ENCODE measurements at regions of chr12 and their contacts with region 1.

Region 1: GRCh38 chr12:79547735-79548609 is 142.8 kb downstream of the PAWR start:
- DNase-seq: peak; percentile 69 to 74
- H3K4me3 ChIP-seq: no peak overlapping the region
- H3K4me3 Mint-ChIP-seq: peak overlapping the region; percentile 57
- H3K27ac Mint-ChIP-seq: peak overlapping the region; percentile 97
- H3K4me1 ChIP-seq: peaks cover 56% of the 10 kb centered on the region
- H3K4me1 Mint-ChIP-seq: peaks cover 56% of the 10 kb centered on the region
- H3K27me3 ChIP-seq: no peaks in the 10 kb centered on the region
- H3K27me3 Mint-ChIP-seq: no peaks in the 10 kb centered on the region
- CTCF ChIP-seq: peak; percentile 56 to 67

Region 2: GRCh38 chr12:79512053-79512452 is 35.9 kb before region 1 on chr12:
- CTCF ChIA-PET with region 1: interaction called, 3 read pairs
- POLR2A ChIA-PET with region 1: no interaction called
- intact Hi-C with region 1: loop called (anchors 2 kb)
- DNase-seq: peak in 1 of 2 experiments; percentile 12
- H3K4me3 ChIP-seq: no peak overlapping the region
- H3K4me3 Mint-ChIP-seq: no peak overlapping the region
- H3K27ac Mint-ChIP-seq: peak overlapping the region; percentile 48
- H3K4me1 ChIP-seq: no peaks in the 10 kb centered on the region
- H3K4me1 Mint-ChIP-seq: no peaks in the 10 kb centered on the region
- H3K27me3 ChIP-seq: no peaks in the 10 kb centered on the region
- H3K27me3 Mint-ChIP-seq: no peaks in the 10 kb centered on the region
- CTCF ChIP-seq: peak in 1 of 2 experiments; percentile 11

Region 3: DNA sequence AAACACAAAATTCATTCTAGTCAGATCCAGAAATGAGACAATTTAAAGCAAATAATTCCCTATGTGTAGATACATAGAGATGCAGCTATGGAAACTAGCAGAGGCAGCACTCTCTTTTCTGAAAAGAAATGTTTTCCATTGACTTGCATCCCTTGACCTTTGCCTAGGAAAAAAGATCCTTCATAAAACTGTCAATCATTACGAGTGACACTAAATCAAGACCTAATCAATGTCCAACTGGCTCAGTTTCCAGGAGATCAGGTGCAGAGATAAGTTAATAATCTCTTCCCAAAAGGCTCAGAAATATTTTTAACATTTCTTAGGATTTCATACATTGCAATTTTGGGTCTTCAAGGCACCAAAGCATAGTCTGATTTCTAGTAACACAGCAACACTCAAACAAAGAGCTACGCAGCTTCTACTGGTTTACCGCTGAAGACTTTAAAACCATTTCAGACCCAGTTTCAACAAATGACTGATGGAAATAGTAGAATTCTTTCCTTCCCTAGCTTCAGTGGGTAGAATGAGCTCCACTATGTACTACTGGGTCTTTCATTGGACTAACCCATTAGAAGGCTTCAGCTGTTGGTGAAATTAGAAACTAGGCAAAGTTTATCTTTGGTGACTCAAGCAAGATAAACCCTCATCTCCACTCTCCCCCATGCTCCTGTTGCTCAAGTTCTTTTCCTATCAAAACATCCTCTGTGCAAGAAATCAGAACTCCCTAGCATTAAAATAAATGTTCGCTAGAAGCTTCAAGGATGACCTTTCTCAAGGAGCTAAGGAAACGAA is 16.7 kb before region 1 on chr12:
- CTCF ChIA-PET with region 1: interaction called, 10 read pairs
- POLR2A ChIA-PET with region 1: interaction called, 8 read pairs
- intact Hi-C with region 1: loop called (anchors 1 kb)
- DNase-seq: no peak
- H3K4me3 ChIP-seq: no peak overlapping the region
- H3K4me3 Mint-ChIP-seq: no peak overlapping the region
- H3K27ac Mint-ChIP-seq: peak overlapping the region; percentile 78
- H3K4me1 ChIP-seq: peaks cover 62% of the 10 kb centered on the region
- H3K4me1 Mint-ChIP-seq: peaks cover 36% of the 10 kb centered on the region
- H3K27me3 ChIP-seq: no peaks in the 10 kb centered on the region
- H3K27me3 Mint-ChIP-seq: no peaks in the 10 kb centered on the region
- CTCF ChIP-seq: no peak

Region 4: GRCh38 chr12:79560225-79560889 is 12.4 kb after region 1 on chr12:
- CTCF ChIA-PET with region 1: interaction called, 7 read pairs
- POLR2A ChIA-PET with region 1: interaction called, 3 read pairs
- intact Hi-C with region 1: loop called (anchors 1 kb)
- DNase-seq: peak; percentile 63 to 64
- H3K4me3 ChIP-seq: no peak overlapping the region
- H3K4me3 Mint-ChIP-seq: peak overlapping the region; percentile 42
- H3K27ac Mint-ChIP-seq: peak overlapping the region; percentile 95
- H3K4me1 ChIP-seq: peaks cover 61% of the 10 kb centered on the region
- H3K4me1 Mint-ChIP-seq: peaks cover 13% of the 10 kb centered on the region
- H3K27me3 ChIP-seq: no peaks in the 10 kb centered on the region
- H3K27me3 Mint-ChIP-seq: no peaks in the 10 kb centered on the region
- CTCF ChIP-seq: no peak

Region 5: DNA sequence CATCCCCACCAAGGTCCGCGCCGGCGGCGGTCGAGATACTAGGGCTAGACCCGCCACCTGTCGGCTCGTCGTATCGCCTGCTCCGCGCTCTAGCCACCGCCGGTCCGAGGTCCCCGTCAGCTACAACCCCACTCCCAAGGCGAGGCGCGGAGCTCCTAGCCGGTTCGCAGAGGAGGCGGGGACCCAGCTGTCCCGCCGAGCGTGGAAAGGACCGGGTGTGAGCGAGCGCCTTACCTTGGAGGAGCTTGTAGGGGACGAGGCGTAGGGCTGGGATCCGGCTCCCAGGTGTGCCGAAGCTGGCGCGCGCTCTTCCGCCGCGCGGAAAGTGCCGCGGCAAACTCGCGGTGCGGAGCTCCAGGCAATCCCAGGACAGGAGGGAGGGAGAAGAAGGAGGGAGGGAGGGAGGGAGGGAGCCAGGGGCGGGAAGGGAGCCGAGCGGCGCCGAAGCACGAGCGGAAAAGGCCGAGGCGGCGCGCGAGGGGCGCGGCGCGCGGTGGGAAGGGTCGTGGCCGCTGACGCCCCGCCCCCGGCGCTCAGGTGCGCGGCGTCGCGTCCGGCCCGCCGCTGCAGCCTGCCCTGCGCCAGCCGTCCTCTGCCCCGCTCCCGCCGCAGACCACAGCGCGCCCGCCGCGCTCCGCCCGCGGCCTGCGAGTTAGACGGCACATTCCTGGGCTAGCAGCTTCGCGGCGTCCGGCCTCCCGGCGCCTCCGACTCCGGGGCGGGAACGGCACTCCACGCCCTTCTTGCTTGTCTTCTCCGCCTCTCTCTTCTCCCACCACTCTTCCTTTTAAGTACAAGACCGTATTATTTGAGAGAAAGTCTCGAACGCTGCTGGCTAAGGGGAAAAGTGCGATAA is 142.9 kb after region 1 on chr12 and contains the start of gene PAWR:
- CTCF ChIA-PET with region 1: interaction called, 4 read pairs
- POLR2A ChIA-PET with region 1: interaction called, 8 read pairs
- intact Hi-C with region 1: loop called (anchors 1 kb)
- DNase-seq: peak; percentile 89 to 92
- H3K4me3 ChIP-seq: peak within 1 kb of the TSS; percentile 98
- H3K4me3 Mint-ChIP-seq: peak within 1 kb of the TSS; percentile 89
- H3K27ac Mint-ChIP-seq: peak within 1 kb of the TSS; percentile 90
- H3K4me1 ChIP-seq: peaks cover 19% of the 10 kb centered on the region
- H3K4me1 Mint-ChIP-seq: peaks cover 23% of the 10 kb centered on the region
- H3K27me3 ChIP-seq: no peaks in the 10 kb centered on the region
- H3K27me3 Mint-ChIP-seq: no peaks in the 10 kb centered on the region
- CTCF ChIP-seq: no peak
- total RNA-seq, gene PAWR: 157 and 163 TPM in 2 replicates

Region 6: DNA sequence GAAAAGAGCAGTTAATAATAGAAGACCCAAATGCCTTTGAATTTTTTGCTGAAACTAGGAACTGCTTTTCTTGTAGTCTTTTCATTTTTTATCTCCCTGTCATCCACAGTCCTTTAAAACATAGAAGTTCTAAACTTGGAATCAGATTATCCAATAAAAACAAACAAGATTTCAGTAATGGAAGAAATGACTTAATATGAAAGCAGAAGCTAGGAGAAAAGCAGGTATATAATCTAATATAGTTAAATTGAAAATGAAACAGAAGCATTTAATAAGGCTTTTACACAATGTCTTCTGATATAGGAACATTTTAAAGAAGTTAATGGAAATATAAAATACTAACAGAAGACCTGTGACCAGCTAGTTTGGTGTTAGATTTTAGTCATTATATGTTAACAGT is 360.4 kb after region 1 on chr12:
- CTCF ChIA-PET with region 1: no interaction called
- POLR2A ChIA-PET with region 1: no interaction called
- intact Hi-C with region 1: no loop called
- DNase-seq: no peak
- H3K4me3 ChIP-seq: no peak overlapping the region
- H3K4me3 Mint-ChIP-seq: no peak overlapping the region
- H3K27ac Mint-ChIP-seq: no peak overlapping the region
- H3K4me1 ChIP-seq: peaks cover 5% of the 10 kb centered on the region; the same call in 1 of the 2 replicates
- H3K4me1 Mint-ChIP-seq: peaks cover 7% of the 10 kb centered on the region
- H3K27me3 ChIP-seq: no peaks in the 10 kb centered on the region
- H3K27me3 Mint-ChIP-seq: no peaks in the 10 kb centered on the region
- CTCF ChIP-seq: no peak

Region 7: DNA sequence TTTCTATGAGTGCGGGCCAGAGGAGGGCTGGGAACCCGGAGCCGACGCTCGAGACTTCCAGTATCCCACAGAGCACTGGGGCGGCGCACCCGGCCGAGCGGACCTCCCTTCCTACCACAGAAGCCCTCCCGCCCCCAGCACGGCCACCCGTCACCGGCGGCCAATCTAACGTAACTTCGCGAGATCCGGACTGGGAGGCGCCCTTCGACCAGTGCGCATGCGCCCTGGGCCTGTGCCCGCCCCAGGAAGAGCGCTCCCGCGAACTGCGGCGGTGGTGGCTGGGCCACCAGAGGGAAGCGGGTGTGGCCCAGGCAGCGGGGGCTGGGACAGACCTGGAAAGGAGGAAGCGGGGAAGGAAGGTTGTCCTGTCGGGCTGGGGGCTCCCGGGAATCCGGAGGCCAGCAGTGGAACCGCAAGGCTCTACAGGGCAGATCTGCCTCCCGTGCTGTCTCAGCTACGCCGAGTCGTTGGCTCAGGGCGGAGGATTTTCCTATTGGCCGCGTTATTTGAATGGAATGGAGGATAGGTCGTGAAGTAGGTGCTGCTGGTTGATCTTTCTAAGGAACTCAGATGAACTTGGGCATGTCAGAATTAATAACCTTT is 387.1 kb after region 1 on chr12 and contains the start of gene PPP1R12A:
- CTCF ChIA-PET with region 1: no interaction called
- POLR2A ChIA-PET with region 1: no interaction called
- intact Hi-C with region 1: loop called (anchors 5 kb)
- DNase-seq: peak; percentile 97
- H3K4me3 ChIP-seq: peak within 1 kb of the TSS; percentile 100
- H3K4me3 Mint-ChIP-seq: peak within 1 kb of the TSS; percentile 83
- H3K27ac Mint-ChIP-seq: peak within 1 kb of the TSS; percentile 71
- H3K4me1 ChIP-seq: peaks cover 10% of the 10 kb centered on the region; the same call in 1 of the 2 replicates
- H3K4me1 Mint-ChIP-seq: peaks cover 5% of the 10 kb centered on the region
- H3K27me3 ChIP-seq: no peaks in the 10 kb centered on the region
- H3K27me3 Mint-ChIP-seq: no peaks in the 10 kb centered on the region
- CTCF ChIP-seq: no peak
- total RNA-seq, gene PPP1R12A: 60.7 and 62.5 TPM in 2 replicates

Measured in Caco-2 (cell line).